A549 (cell line): ENCODE measurements at regions of chr3 and their contacts with region 1.

Region 1: GRCh38 chr3:14144423-14145075 is 19.7 kb downstream of the TMEM43 start:
- DNase-seq: peak; percentile 95 to 98
- ATAC-seq: peak; percentile 70 to 81
- H3K4me3 ChIP-seq: peak overlapping the region; percentile 23; the same call in 1 of the 3 replicates
- H3K27ac ChIP-seq: peak overlapping the region; percentile 76 to 88
- H3K4me1 ChIP-seq: peaks cover 31% of the 10 kb centered on the region
- CTCF ChIP-seq: no peak
- EP300 ChIP-seq: no peak
- POLR2A ChIP-seq: no peak
- RAD21 ChIP-seq: no peak

Region 2: DNA sequence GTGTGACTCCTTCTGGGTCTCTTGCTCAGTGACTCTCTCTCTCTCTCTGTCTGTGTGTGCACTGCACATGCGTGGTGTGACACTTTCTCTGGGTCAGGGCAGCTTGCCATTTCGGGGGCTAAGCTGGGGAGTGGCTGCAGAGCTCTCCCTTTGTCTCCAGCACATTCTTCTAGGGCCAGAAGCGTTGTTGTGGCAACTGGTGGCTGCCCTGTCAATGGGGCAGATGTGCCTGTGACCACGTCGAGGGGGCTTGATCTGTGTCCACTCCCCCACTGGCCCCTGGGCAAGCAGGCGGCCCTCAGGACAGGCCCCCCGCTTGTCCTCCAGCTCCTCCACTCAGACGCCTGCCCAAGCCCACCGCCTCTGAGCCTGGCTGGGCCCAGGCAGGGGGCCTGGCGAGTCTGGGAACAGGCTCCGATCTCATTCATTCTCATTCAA is 332.5 kb before region 1 on chr3:
- CTCF ChIA-PET with region 1: no interaction called
- POLR2A ChIA-PET with region 1: no interaction called
- DNase-seq: no peak
- ATAC-seq: 0 out of 6 replicates have a peak, but pooled peaks of 1 of the 2 experiments have one; percentile 47
- H3K4me3 ChIP-seq: no peak overlapping the region
- H3K27ac ChIP-seq: no peak overlapping the region
- H3K4me1 ChIP-seq: no peaks in the 10 kb centered on the region
- CTCF ChIP-seq: no peak
- EP300 ChIP-seq: no peak
- POLR2A ChIP-seq: no peak
- RAD21 ChIP-seq: no peak

Region 3: DNA sequence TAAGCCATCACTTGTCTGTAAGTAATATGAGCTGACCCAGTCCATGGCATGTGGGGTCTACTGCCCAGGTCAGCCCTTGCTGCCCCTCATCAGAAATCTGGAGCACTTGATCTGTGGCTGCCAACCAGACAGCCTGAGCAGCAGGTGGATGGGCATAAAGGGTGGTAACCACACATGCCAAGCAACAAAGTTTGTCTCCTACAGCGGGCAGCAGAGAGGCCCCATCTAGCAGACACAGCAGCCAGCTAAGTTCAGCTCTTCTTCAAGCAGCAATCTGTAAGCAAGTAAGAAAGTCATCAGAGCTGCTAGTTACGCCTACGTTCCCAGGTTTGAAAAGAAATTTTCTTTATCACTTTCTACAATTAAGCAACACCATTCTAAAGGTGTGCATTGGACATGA is 47.8 kb before region 1 on chr3:
- CTCF ChIA-PET with region 1: no interaction called
- POLR2A ChIA-PET with region 1: no interaction called
- DNase-seq: peak in 1 of 2 experiments; percentile 23
- ATAC-seq: peak; percentile 72 to 87; a peak in 5 of 6 replicates
- H3K4me3 ChIP-seq: no peak overlapping the region
- H3K27ac ChIP-seq: no peak overlapping the region
- H3K4me1 ChIP-seq: no peaks in the 10 kb centered on the region
- CTCF ChIP-seq: no peak
- EP300 ChIP-seq: no peak
- POLR2A ChIP-seq: no peak
- RAD21 ChIP-seq: no peak

Region 4: GRCh38 chr3:14124615-14125190 is 19.8 kb before region 1 on chr3 and contains the starts of genes CHCHD4 and TMEM43:
- CTCF ChIA-PET with region 1: interaction called, 9 read pairs
- POLR2A ChIA-PET with region 1: interaction called, 35 read pairs
- DNase-seq: peak; percentile 99 to 100
- ATAC-seq: peak; percentile 81 to 92
- H3K4me3 ChIP-seq: peak within 1 kb of the TSS; percentile 91
- H3K27ac ChIP-seq: peak within 1 kb of the TSS; percentile 94 to 98
- H3K4me1 ChIP-seq: peaks cover 17% of the 10 kb centered on the region
- CTCF ChIP-seq: no peak
- EP300 ChIP-seq: no peak
- POLR2A ChIP-seq: peak; percentile 56
- RAD21 ChIP-seq: no peak
- polyA plus RNA-seq, gene CHCHD4: 41.9 and 48.8 TPM in 2 replicates
- polyA plus RNA-seq, gene TMEM43: 75.2 and 79.0 TPM in 2 replicates

Region 5: GRCh38 chr3:14133255-14133701 is 11.3 kb before region 1 on chr3:
- CTCF ChIA-PET with region 1: interaction called, 14 read pairs
- POLR2A ChIA-PET with region 1: interaction called, 3 read pairs
- DNase-seq: no peak
- ATAC-seq: peak; percentile 22 to 37; a peak in 3 of 6 replicates
- H3K4me3 ChIP-seq: no peak overlapping the region
- H3K27ac ChIP-seq: no peak overlapping the region
- H3K4me1 ChIP-seq: peaks cover 8% of the 10 kb centered on the region; the same call in 2 of the 3 replicates
- CTCF ChIP-seq: no peak
- EP300 ChIP-seq: no peak
- POLR2A ChIP-seq: no peak
- RAD21 ChIP-seq: no peak

Region 6: GRCh38 chr3:14178247-14179113 is 33.9 kb after region 1 on chr3 and contains the starts of genes LSM3 and XPC:
- CTCF ChIA-PET with region 1: interaction called, 10 read pairs
- POLR2A ChIA-PET with region 1: interaction called, 31 read pairs
- DNase-seq: peak; percentile 90 to 99
- ATAC-seq: peak; percentile 94 to 98
- H3K4me3 ChIP-seq: peak within 1 kb of the TSS; percentile 71
- H3K27ac ChIP-seq: peak within 1 kb of the TSS; percentile 95 to 97
- H3K4me1 ChIP-seq: peaks cover 41% of the 10 kb centered on the region
- CTCF ChIP-seq: no peak
- EP300 ChIP-seq: no peak
- POLR2A ChIP-seq: peak; percentile 87
- RAD21 ChIP-seq: peak in 1 of 2 experiments; percentile 23; a peak in 1 of 5 replicates
- polyA plus RNA-seq, gene LSM3: 11.8 and 23.9 TPM in 2 replicates
- polyA plus RNA-seq, gene XPC: 36.3 and 58.9 TPM in 2 replicates